PC-9 (cell line): ENCODE measurements at regions of chrX and their contacts with region 1.

Region 1: GRCh38 chrX:9650091-9650490 is 115.6 kb downstream of the GPR143 start:
- DNase-seq: no peak
- H3K4me3 ChIP-seq: no peak overlapping the region
- H3K27ac ChIP-seq: no peak overlapping the region
- H3K4me1 ChIP-seq: no peaks in the 10 kb centered on the region
- H3K27me3 ChIP-seq: no peaks in the 10 kb centered on the region
- CTCF ChIP-seq: no peak

Region 2: DNA sequence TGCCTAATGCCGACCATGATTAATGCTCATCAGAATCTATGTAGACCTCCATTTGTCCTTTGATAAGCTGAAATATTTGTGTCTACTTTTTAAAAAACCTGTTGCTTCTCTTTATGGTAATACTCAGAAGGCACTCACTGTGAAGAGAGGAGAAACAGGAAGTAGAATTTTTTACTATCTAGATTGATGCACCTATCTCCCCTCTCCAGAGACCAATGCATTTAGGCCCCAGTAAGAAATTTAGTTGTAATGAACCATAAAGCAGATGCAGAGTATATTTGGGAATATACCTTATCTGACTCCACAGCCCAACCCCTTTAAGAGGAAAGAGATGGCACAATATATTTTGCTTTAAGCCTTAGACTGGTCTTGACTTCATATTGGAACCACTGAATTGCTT is 174.1 kb before region 1 on chrX:
- CTCF ChIA-PET with region 1: interaction called, 15 read pairs
- POLR2A ChIA-PET with region 1: no interaction called
- intact Hi-C with region 1: no loop called
- DNase-seq: no peak
- H3K4me3 ChIP-seq: no peak overlapping the region
- H3K27ac ChIP-seq: no peak overlapping the region
- H3K4me1 ChIP-seq: no peaks in the 10 kb centered on the region
- H3K27me3 ChIP-seq: no peaks in the 10 kb centered on the region
- CTCF ChIP-seq: no peak

Region 3: DNA sequence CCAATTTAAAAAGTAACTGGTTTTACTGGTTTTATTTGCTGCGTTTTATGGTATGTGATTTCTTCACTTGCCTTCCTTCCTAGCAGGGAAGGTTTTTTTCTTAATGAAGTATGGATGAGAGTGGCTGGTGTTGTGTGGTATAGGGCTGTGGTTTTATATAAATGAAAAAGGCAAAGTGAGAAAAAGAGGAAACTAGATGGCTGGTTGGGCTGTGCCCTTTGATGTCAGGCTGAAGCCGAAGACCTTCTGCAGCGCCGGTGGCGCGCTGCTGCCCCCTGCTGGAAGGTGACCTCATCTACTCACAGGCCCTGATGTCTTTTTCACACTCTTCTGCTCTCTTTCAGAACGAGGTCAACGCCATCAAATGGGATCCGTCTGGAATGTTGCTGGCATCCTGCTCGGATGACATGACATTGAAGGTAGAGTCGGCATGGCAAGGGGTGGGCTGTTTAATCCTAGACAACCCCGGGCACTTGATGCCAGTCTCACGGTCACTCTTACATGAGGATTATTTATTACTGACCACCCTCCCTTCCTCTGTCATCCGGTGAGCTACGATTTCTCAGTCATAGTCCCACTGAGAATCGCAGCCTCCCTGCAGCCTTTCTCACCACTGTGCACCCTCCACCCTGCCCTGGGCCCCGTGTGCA is 58.9 kb after region 1 on chrX:
- CTCF ChIA-PET with region 1: no interaction called
- POLR2A ChIA-PET with region 1: no interaction called
- intact Hi-C with region 1: no loop called
- DNase-seq: peak; percentile 58 to 72
- H3K4me3 ChIP-seq: no peak overlapping the region
- H3K27ac ChIP-seq: 0 out of 2 replicates have a peak overlapping the region, but pooled peaks have one; percentile 12
- H3K4me1 ChIP-seq: peaks cover 13% of the 10 kb centered on the region
- H3K27me3 ChIP-seq: no peaks in the 10 kb centered on the region
- CTCF ChIP-seq: peak; percentile 84

Region 4: DNA sequence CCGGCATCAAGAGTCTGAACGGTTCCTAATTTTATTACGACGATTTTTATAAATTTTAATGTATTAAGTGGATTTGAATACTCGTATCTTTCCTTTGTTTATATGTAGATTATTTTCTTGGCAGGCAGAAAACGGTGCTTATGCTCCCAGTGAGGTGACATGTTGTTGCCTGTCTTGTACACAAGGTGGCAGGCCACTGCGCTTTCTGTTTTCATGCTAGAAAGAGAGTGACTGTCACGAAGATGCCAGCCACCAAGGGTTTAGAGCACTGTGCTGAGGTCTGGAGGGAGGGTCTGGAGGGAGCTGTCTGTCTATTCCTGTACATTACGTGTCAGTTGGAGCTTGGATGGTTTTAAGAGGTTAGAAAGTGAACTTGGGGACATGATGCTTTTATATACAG is 223.9 kb after region 1 on chrX:
- CTCF ChIA-PET with region 1: no interaction called
- POLR2A ChIA-PET with region 1: no interaction called
- intact Hi-C with region 1: no loop called
- DNase-seq: peak in 1 of 2 experiments; percentile 24
- H3K4me3 ChIP-seq: no peak overlapping the region
- H3K27ac ChIP-seq: peak overlapping the region; percentile 39; the same call in 1 of the 2 replicates
- H3K4me1 ChIP-seq: peaks cover 9% of the 10 kb centered on the region
- H3K27me3 ChIP-seq: no peaks in the 10 kb centered on the region
- CTCF ChIP-seq: peak; percentile 64